GM23248 (cell line): ENCODE measurements at regions of chr4 and their contacts with region 1.

Region 1: GRCh38 chr4:102620697-102621497 is 119.7 kb downstream of the NFKB1 start:
- DNase-seq: peak; percentile 84
- H3K4me3 ChIP-seq: peak overlapping the region; percentile 26; the same call in 1 of the 2 replicates
- H3K27ac ChIP-seq: peak overlapping the region; percentile 80
- H3K4me1 ChIP-seq: peaks cover 22% of the 10 kb centered on the region
- H3K27me3 ChIP-seq: no peaks in the 10 kb centered on the region

Region 2: GRCh38 chr4:102299354-102300107 is 321.4 kb before region 1 on chr4:
- in situ Hi-C with region 1: no loop called
- DNase-seq: peak; percentile 70
- H3K4me3 ChIP-seq: no peak overlapping the region
- H3K27ac ChIP-seq: no peak overlapping the region
- H3K4me1 ChIP-seq: no peaks in the 10 kb centered on the region
- H3K27me3 ChIP-seq: no peaks in the 10 kb centered on the region

Region 3: DNA sequence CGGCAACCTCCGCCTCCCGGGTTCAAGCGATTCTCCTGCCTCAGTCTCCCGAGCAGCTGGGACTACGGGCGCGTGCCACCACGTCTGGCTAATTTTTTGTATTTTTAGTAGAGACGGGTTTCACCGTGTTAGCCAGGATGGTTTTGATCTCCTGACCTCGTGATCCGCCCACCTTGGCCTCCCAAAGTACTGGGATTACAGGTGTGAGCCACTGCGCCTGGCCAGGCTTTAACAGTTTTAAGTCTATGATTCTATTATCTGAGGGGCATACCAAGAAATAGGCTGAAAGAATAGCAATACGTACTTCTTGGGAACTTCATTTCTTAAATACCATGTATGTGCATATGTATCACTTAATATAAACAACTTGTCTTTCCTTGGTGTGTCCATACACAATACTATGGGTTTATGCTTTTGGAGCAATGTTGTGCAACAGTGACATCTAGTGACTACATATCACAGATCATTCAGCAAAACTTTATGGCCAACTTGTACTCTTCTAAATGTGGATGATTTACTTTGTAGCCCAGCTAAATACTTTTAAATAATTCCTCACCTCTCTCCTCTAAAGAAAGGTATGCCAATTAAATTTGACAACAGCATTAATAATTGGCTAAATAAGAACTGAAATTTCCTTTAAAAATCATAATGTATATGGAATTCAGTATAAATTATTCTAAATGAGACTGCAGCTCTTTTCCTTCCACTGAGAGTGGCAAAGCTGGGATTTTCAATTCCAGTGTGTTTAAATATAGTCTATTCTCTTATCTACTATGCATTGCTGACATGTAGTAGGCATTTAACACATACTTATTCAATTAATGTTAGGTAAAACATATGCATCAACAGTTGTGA is 388.2 kb after region 1 on chr4:
- in situ Hi-C with region 1: loop called (anchors 5 kb)
- DNase-seq: peak; percentile 76
- H3K4me3 ChIP-seq: no peak overlapping the region
- H3K27ac ChIP-seq: no peak overlapping the region
- H3K4me1 ChIP-seq: peaks cover 13% of the 10 kb centered on the region
- H3K27me3 ChIP-seq: no peaks in the 10 kb centered on the region

Region 4: GRCh38 chr4:103099691-103100392 is 478.9 kb after region 1 on chr4 and contains the start of gene BDH2:
- in situ Hi-C with region 1: loop called (anchors 10 kb)
- DNase-seq: peak; percentile 97
- H3K4me3 ChIP-seq: peak within 1 kb of the TSS; percentile 87
- H3K27ac ChIP-seq: peak within 1 kb of the TSS; percentile 87
- H3K4me1 ChIP-seq: peaks cover 13% of the 10 kb centered on the region
- H3K27me3 ChIP-seq: no peaks in the 10 kb centered on the region
- total RNA-seq, gene BDH2: 57.9 and 63.0 TPM in 2 replicates

Region 5: GRCh38 chr4:103904123-103904522 is 1283.2 kb after region 1 on chr4:
- in situ Hi-C with region 1: no loop called
- DNase-seq: peak; percentile 64
- H3K4me3 ChIP-seq: no peak overlapping the region
- H3K27ac ChIP-seq: no peak overlapping the region
- H3K4me1 ChIP-seq: peaks cover 4% of the 10 kb centered on the region
- H3K27me3 ChIP-seq: no peaks in the 10 kb centered on the region